Common myeloid progenitor, CD34-positive (primary cell): ENCODE measurements at regions of chr12 and their contacts with region 1.

Region 1: GRCh38 chr12:52582971-52583456 is 9.4 kb upstream of the KRT74 start:
- DNase-seq: peak; percentile 58 to 82 (median 70)
- H3K4me3 ChIP-seq: no peak overlapping the region
- H3K27ac ChIP-seq: no peak overlapping the region
- H3K4me1 ChIP-seq: peaks cover 0 to 13% (median 3%) of the 10 kb centered on the region in 4 experiments
- H3K27me3 ChIP-seq: peaks cover 0 to 13% (median 0%) of the 10 kb centered on the region in 5 experiments

Region 2: DNA sequence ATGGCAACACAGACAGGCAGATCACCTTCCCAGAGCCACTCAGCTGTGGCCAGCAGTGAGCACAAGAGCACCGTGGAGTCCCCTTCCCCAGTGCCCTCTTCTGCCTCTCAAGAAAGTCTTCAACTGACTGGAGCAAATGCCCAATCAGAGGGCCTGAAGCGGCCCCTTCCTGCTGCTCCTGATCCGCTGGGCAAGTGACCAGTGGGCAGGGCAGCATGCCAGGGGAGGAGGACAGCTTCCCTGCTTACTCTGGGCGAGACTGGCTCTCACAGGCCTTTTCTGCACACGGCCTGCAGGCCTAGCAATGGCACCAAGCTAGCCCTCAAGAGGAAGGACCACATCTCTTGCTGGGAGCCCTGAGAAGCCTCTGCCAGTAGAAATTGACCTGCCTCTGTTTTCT is 31.0 kb before region 1 on chr12:
- CTCF ChIA-PET with region 1: no interaction called
- POLR2A ChIA-PET with region 1: no interaction called
- DNase-seq: no peak
- H3K4me3 ChIP-seq: no peak overlapping the region
- H3K27ac ChIP-seq: no peak overlapping the region
- H3K4me1 ChIP-seq: no peaks in the 10 kb centered on the region
- H3K27me3 ChIP-seq: peaks cover 0 to 12% (median 0%) of the 10 kb centered on the region in 5 experiments

Region 3: GRCh38 chr12:52633383-52633782 is 50.4 kb after region 1 on chr12:
- CTCF ChIA-PET with region 1: interaction called, 10 read pairs
- POLR2A ChIA-PET with region 1: no interaction called
- DNase-seq: peak; percentile 58 to 96 (median 93)
- H3K4me3 ChIP-seq: no peak overlapping the region
- H3K27ac ChIP-seq: no peak overlapping the region
- H3K4me1 ChIP-seq: peaks cover 15 to 65% (median 59%) of the 10 kb centered on the region in 4 experiments
- H3K27me3 ChIP-seq: no peaks in the 10 kb centered on the region